Activated T-helper 1 cell treated with anti-CD3 and anti-CD28 coated beads, Interleukin-12 subunit alpha, Interleukin-12 subunit beta, Interleukin-2, Interleukin-4 antibody, amounts not matched to agents 30 ng/mL and 10 ng/mL and 1 ng/mL, durations not matched to agents 14 hours and 24 hours and 36 hours (primary cell): ENCODE measurements at regions of chr2 and their contacts with region 1.

Region 1: GRCh38 chr2:177148477-177149154 is 64.0 kb upstream of the HNRNPA3 start:
- DNase-seq: peak; percentile 65
- H3K4me3 Mint-ChIP-seq: peak overlapping the region; percentile 82
- H3K27ac Mint-ChIP-seq: peak overlapping the region; percentile 10
- H3K4me1 Mint-ChIP-seq: peaks cover 13% of the 10 kb centered on the region
- H3K27me3 Mint-ChIP-seq: peaks cover 61% of the 10 kb centered on the region

Region 2: GRCh38 chr2:176126929-176127773 is 1021.5 kb before region 1 on chr2:
- intact Hi-C with region 1: loop called (anchors 1 kb)
- DNase-seq: peak; percentile 24
- H3K4me3 Mint-ChIP-seq: no peak overlapping the region
- H3K27ac Mint-ChIP-seq: peak overlapping the region; percentile 23
- H3K4me1 Mint-ChIP-seq: peaks cover 31% of the 10 kb centered on the region
- H3K27me3 Mint-ChIP-seq: peaks cover 76% of the 10 kb centered on the region

Region 3: DNA sequence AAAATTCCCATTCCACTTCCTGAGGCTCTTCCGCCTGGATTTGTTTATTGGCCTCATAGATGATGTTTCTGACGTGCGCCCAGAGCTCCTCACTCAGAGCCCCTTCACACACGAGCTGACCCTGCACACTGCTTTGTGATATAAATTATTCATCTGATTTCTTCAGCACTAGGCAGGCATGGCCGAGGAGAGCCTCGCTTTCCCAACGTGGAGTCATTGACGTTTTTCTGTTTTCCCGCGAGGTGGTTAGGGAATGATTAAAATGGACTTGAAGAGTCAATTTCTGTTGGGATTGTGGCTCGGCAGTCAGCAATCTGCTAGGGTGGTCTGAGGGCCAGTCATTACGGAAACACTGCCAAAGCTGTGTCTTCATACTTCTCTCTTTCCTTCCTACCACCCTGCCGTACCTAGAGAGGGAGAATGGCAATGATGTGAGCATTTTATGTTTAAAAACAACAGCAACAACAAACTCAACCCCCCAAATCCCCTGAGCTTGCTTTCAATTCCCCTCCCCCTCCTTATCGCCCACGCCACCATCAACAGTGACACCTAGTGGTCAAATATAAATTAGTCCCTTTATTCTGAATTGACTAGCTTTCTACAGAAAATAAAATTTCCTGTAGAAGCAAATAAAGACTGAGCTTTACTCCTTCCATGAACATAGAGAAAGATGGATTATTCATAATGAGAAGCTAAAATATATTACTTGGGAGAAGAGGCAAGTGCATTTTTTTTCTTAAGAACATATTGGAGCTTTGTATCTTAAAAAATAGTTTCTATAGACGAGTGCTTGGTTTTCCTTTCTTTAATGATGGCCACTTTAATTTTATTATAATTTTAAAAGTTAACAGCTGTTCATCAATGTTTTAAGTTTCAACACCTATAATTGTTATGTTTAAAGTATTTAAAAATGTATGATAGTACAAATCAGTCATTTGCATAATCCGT is 594.2 kb before region 1 on chr2:
- intact Hi-C with region 1: loop called (anchors 1 kb)
- DNase-seq: no peak
- H3K4me3 Mint-ChIP-seq: peak overlapping the region; percentile 72
- H3K27ac Mint-ChIP-seq: no peak overlapping the region
- H3K4me1 Mint-ChIP-seq: peaks cover 14% of the 10 kb centered on the region
- H3K27me3 Mint-ChIP-seq: peaks cover 30% of the 10 kb centered on the region

Region 4: DNA sequence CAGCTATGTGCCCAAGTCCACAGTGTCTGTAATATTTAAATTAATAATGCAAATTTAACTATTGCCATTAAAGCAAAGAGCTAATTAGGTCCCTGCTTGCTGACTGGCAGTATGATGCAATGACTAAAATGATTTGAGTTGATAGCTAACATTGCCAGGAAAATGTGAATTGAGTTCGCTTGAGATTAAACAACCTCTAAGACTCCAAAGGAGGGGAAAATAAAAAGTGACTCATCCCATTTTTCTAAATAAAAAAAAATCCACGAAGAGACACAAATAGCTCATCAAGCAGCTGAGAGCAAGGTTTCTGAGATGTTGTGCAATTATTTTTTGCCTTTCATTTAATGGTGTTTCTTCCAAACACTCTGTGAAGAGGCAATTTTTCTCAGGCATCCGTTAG is 466.3 kb before region 1 on chr2:
- intact Hi-C with region 1: loop called (anchors 5 kb)
- DNase-seq: no peak
- H3K4me3 Mint-ChIP-seq: no peak overlapping the region
- H3K27ac Mint-ChIP-seq: no peak overlapping the region
- H3K4me1 Mint-ChIP-seq: no peaks in the 10 kb centered on the region
- H3K27me3 Mint-ChIP-seq: peaks cover 19% of the 10 kb centered on the region

Region 5: GRCh38 chr2:176931588-176932563 is 216.7 kb before region 1 on chr2:
- intact Hi-C with region 1: loop called (anchors 1 kb)
- DNase-seq: peak; percentile 39
- H3K4me3 Mint-ChIP-seq: peak overlapping the region; percentile 58
- H3K27ac Mint-ChIP-seq: peak overlapping the region; percentile 95
- H3K4me1 Mint-ChIP-seq: peaks cover 36% of the 10 kb centered on the region
- H3K27me3 Mint-ChIP-seq: peaks cover 3% of the 10 kb centered on the region

Region 6: GRCh38 chr2:177195194-177195593 is 46.6 kb after region 1 on chr2:
- intact Hi-C with region 1: no loop called
- DNase-seq: no peak
- H3K4me3 Mint-ChIP-seq: no peak overlapping the region
- H3K27ac Mint-ChIP-seq: no peak overlapping the region
- H3K4me1 Mint-ChIP-seq: peaks cover 7% of the 10 kb centered on the region
- H3K27me3 Mint-ChIP-seq: no peaks in the 10 kb centered on the region

Region 7: DNA sequence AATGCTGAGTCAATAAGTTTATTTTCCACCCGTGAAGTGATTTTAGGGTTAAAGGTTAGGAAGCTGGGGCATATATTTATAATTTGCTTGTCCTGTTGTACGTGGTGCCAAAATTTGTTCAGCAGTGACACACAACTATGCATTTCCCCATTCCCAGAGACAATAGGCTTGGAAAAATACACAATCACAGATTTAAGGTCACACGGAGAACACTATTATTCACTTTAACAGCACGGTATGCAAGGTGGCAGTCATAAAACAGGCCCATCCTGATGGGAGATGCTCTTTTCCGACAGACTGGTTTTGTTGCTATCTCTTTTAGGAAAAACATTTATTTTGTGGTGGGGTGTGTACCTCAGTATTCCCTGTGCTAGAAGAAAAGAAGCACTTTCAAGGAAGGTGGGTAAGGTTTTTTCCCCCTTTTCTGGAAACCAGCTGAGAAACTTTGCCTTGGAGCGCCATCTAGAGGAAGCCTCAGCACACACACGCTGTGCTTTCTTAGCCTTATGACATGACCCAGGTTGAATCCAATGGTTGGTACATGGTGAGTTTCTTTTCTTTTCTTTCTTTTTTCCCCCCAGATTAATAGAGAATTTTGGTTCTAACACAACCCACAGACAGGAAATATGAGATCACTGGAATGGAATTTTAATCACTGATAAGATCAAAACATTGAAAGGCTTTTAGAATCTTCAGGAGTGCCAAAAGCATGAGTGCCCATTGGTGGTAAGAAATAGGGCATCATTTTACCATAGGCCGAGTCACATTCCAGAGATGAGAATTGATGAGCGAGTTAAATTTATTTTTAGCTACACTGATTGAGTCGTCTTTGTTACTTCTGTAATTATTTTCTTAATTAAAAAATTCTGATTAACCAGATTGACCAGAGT is 576.0 kb after region 1 on chr2:
- intact Hi-C with region 1: loop called (anchors 5 kb)
- DNase-seq: peak; percentile 16
- H3K4me3 Mint-ChIP-seq: no peak overlapping the region
- H3K27ac Mint-ChIP-seq: no peak overlapping the region
- H3K4me1 Mint-ChIP-seq: no peaks in the 10 kb centered on the region
- H3K27me3 Mint-ChIP-seq: peaks cover 24% of the 10 kb centered on the region